ENCODE measurements at regions of chr13 and their contacts with region 1.

Region 1: DNA sequence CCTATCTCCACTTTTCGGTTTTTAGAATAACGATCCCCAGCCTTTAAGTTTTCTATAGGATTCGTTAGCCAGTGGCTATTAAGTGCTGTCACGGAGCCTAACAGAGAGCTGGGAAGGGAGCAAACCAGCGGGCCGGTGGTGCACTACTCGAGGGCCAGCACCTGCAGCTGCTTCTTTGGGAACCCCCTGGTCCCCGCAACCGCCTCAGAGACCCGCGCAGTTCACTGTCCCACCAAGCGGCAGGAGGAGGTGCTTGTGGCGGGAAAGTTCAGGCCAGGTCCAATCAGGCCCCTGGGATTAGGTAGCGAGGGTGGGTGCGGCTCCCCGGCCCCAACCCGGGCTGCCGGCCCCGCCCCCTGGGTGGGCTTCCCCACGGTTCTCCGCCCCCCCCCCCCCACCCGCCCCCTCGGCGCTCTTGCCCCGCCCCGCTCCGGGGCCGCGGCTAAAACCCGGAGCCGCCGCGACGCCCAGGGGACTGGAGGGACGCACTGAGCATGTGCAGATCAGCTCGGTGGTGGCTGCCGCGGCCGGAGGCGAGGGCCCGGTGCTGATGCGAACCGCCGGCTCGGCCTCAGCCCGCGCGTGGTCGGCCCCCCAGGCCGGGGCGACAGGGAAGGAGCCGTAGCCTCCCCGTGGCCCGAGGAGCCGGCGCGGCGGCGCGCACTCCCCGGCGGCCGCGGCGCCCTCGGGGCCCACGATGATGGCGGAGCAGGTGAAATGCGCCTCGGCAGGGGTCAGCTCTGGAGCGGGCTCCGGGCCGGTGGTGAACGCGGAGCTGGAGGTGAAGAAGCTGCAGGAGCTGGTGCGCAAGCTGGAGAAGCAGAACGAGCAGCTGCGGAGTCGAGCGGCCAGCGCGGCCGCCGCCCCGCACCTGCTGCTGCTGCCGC is at the start of gene SLAIN1:
- DNase-seq: peak; percentile 71
- H3K4me3 Mint-ChIP-seq: peak within 1 kb of the TSS; percentile 95
- H3K27ac Mint-ChIP-seq: peak within 1 kb of the TSS; percentile 47
- H3K4me1 Mint-ChIP-seq: peaks cover 38% of the 10 kb centered on the region
- H3K27me3 Mint-ChIP-seq: peaks cover 26% of the 10 kb centered on the region
- total RNA-seq, gene SLAIN1: 36.3 and 43.3 TPM in 2 replicates

Region 2: DNA sequence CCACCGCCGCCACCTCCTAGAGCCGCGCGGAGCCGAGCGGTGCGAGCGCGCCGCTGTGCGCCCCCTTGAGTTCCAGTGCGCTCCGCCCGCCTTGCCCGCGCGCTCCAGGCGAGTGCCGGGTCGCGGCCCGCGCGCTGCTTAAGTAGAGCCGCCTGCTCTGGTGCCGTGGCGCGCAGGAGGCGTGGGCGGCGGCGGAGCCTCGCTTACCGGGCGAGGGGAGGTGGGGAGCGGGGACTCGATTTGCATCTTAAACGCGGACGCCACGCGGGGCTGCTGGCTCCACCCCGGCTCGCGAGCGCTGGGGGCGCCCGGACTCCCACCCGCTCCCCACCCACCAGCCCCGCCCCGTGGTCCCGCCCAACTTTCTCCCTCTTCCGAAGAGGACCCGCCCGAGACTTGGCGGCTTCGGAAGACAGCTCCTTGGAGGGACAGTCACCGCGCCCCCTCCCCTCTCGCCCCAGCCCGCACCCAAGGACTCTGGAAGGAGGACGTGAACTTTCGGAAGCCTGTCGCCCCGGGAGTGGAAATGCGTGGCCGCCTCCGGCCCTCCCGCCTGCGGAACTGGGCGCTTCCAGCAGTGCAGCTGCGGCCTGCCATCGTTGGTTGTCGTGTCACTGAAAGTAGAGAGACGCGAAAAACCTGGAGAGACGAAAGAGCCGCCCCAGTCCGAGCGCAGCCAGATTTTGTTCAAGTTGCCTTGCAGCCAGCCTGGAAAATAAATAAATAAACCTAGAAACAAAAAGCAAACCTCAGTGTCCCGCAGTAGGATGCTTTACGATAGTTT is 811.0 kb before region 1 on chr13 and contains the start of gene KCTD12:
- intact Hi-C with region 1: loop called (anchors 2 kb)
- DNase-seq: peak; percentile 60
- H3K4me3 Mint-ChIP-seq: peak within 1 kb of the TSS; percentile 90
- H3K27ac Mint-ChIP-seq: peak within 1 kb of the TSS; percentile 85
- H3K4me1 Mint-ChIP-seq: peaks cover 28% of the 10 kb centered on the region
- H3K27me3 Mint-ChIP-seq: peaks cover 28% of the 10 kb centered on the region
- total RNA-seq, gene KCTD12: 10.4 and 10.7 TPM in 2 replicates

Region 3: GRCh38 chr13:77329133-77329910 is 368.1 kb before region 1 on chr13:
- intact Hi-C with region 1: loop called (anchors 1 kb)
- DNase-seq: peak; percentile 88
- H3K4me3 Mint-ChIP-seq: peak overlapping the region; percentile 88
- H3K27ac Mint-ChIP-seq: peak overlapping the region; percentile 93
- H3K4me1 Mint-ChIP-seq: peaks cover 38% of the 10 kb centered on the region
- H3K27me3 Mint-ChIP-seq: peaks cover 5% of the 10 kb centered on the region

Region 4: DNA sequence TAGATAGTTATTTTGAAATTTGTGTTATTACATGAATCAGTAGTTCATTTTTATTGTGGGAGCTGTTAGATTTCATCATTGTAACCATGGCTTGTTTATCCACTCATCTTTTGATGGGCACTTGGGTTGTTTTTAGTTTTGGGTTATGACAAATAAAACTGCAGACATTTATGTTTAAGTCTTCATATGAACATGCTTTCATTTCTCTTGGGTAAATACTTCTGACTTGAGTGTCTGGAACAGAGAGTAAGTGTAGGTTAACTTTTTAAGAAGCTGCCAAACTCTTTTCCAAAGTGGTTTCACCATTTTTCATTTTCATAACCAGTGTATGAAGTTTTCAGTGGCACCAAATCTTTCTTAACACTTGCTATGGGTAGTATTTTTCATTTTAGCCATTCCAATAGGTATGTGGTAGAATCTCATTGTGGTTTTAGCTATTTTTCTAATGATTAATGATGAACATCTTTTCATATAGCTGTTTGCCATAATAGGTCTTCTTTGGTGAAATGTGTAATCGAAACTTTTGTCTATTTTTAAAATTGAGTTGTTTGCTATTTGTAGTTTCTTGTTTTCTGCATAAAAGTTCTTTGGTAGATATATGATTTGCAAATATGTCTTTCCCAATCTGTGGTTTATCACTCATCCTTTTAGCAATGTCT is 17.9 kb after region 1 on chr13:
- intact Hi-C with region 1: loop called (anchors 1 kb)
- DNase-seq: no peak
- H3K4me3 Mint-ChIP-seq: no peak overlapping the region
- H3K27ac Mint-ChIP-seq: peak overlapping the region; percentile 47
- H3K4me1 Mint-ChIP-seq: peaks cover 31% of the 10 kb centered on the region
- H3K27me3 Mint-ChIP-seq: no peaks in the 10 kb centered on the region

Region 5: GRCh38 chr13:77737583-77738200 is 40.2 kb after region 1 on chr13:
- intact Hi-C with region 1: loop called (anchors 1 kb)
- DNase-seq: no peak
- H3K4me3 Mint-ChIP-seq: no peak overlapping the region
- H3K27ac Mint-ChIP-seq: no peak overlapping the region
- H3K4me1 Mint-ChIP-seq: peaks cover 13% of the 10 kb centered on the region
- H3K27me3 Mint-ChIP-seq: no peaks in the 10 kb centered on the region

Region 6: DNA sequence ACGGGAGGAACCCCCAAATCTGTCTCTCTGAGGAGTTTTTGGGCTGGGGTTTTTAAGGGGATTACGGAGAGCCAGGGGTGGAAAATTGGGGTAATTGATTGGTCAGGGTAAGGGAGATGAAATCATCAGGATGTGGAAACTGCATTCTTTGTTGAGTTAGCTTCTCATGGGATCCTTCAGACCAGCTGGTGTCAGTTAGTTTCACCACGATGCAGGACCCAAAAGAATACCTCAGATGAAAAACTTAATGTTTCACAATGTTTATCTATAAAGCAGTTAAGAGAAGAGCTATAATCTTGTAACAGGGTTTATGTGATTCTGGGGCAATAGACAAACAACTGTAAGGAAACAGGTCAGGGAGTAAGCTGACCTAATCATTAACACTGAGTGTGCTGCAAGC is 675.1 kb after region 1 on chr13:
- intact Hi-C with region 1: no loop called
- DNase-seq: no peak
- H3K4me3 Mint-ChIP-seq: no peak overlapping the region
- H3K27ac Mint-ChIP-seq: no peak overlapping the region
- H3K4me1 Mint-ChIP-seq: no peaks in the 10 kb centered on the region
- H3K27me3 Mint-ChIP-seq: no peaks in the 10 kb centered on the region

Region 7: GRCh38 chr13:78658635-78659449 is 961.4 kb after region 1 on chr13 and contains the start of gene OBI1:
- intact Hi-C with region 1: loop called (anchors 5 kb)
- DNase-seq: peak; percentile 84
- H3K4me3 Mint-ChIP-seq: peak within 1 kb of the TSS; percentile 96
- H3K27ac Mint-ChIP-seq: peak within 1 kb of the TSS; percentile 97
- H3K4me1 Mint-ChIP-seq: peaks cover 36% of the 10 kb centered on the region
- H3K27me3 Mint-ChIP-seq: no peaks in the 10 kb centered on the region
- total RNA-seq, gene OBI1: 20.0 and 21.1 TPM in 2 replicates

Measured in activated T-helper 1 cell treated with anti-CD3 and anti-CD28 coated beads, Interleukin-12 subunit alpha, Interleukin-12 subunit beta, Interleukin-2, Interleukin-4 antibody, amounts not matched to agents 30 ng/mL and 10 ng/mL and 1 ng/mL, durations not matched to agents 14 hours and 24 hours and 36 hours (primary cell).